Right cardiac atrium (tissue), 5 donors: ENCODE measurements at regions of chr3 and their contacts with region 1.

Region 1: GRCh38 chr3:32184187-32184730 is 54.2 kb upstream of the CMTM8 start:
- DNase-seq: no peak
- ATAC-seq: no peak
- H3K4me3 ChIP-seq: no peak overlapping the region
- H3K27ac ChIP-seq: no peak overlapping the region
- H3K4me1 ChIP-seq: peaks cover 1% of the 10 kb centered on the region
- H3K27me3 ChIP-seq: no peaks in the 10 kb centered on the region

Region 2: DNA sequence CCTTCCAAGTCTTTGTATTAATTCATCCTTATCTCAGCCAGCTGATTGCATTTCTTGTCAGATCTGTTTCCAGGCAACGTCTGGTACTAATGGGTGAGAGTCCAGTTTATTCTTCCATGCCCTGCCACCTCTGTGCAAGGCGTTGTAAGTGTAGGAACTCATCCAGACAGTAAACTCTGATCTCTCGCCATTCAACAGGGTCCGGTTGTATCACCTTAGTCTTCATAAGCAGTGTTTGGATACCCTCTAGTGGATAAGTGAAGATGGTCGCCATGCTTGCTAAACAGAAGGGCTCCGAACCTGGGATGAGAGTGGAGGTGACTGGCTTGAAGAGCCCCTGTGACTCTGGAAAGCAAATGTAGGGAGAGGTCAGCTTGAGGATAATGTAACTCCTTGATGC is 155.8 kb after region 1 on chr3:
- intact Hi-C with region 1: loop called in 2 of 4 experiments (anchors 5 to 10 kb)
- DNase-seq: no peak
- ATAC-seq: peak; percentile 73 to 79
- H3K4me3 ChIP-seq: no peak overlapping the region
- H3K27ac ChIP-seq: no peak overlapping the region
- H3K4me1 ChIP-seq: peaks cover 3% of the 10 kb centered on the region
- H3K27me3 ChIP-seq: no peaks in the 10 kb centered on the region